ENCODE measurements at regions of chr2 and their contacts with region 1.

Region 1: DNA sequence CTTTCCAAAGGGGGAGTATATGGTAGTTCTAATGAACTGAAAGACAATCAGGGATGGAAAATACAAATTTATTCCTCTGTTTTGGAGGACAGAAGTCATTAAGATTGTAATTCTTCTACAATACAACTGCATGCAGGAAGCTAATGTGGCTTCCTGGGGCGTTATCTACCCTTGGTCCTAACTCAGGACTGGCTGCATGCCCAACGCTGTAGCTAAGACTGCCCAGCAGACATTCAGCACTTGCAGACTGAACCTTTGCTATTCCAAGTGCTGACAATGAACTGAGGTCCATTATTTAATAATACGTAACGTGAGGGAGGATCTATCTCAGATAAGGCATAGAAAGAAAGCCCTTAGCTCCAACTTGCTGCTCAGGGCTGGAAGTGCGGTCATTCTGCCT is 53.2 kb downstream of the ZAP70 start:
- DNase-seq: no peak
- H3K4me3 ChIP-seq: no peak overlapping the region
- H3K4me3 Mint-ChIP-seq: no peak overlapping the region
- H3K27ac ChIP-seq: no peak overlapping the region
- H3K27ac Mint-ChIP-seq: peak overlapping the region in 2 of 7 donors; percentile 0 to 8
- H3K4me1 ChIP-seq: peaks cover 8% of the 10 kb centered on the region
- H3K4me1 Mint-ChIP-seq: peaks cover 4 to 23% (median 12%) of the 10 kb centered on the region in 4 donors
- H3K27me3 ChIP-seq: no peaks in the 10 kb centered on the region
- H3K27me3 Mint-ChIP-seq: no peaks in the 10 kb centered on the region

Region 2: GRCh38 chr2:97710596-97711386 is 55.8 kb before region 1 on chr2:
- CTCF ChIA-PET with region 1: interaction called, 27 read pairs
- POLR2A ChIA-PET with region 1: interaction called, 3 read pairs
- intact Hi-C with region 1: loop called (anchors 2 kb)
- DNase-seq: peak in 1 of 5 donors; percentile 71
- H3K4me3 ChIP-seq: no peak overlapping the region
- H3K4me3 Mint-ChIP-seq: peak overlapping the region in 6 of 8 donors; percentile 3 to 97 (median 16)
- H3K27ac ChIP-seq: peak overlapping the region; percentile 31
- H3K27ac Mint-ChIP-seq: peak overlapping the region; percentile 69 to 95 (median 86)
- H3K4me1 ChIP-seq: peaks cover 57% of the 10 kb centered on the region
- H3K4me1 Mint-ChIP-seq: peaks cover 34 to 60% (median 45%) of the 10 kb centered on the region in 4 donors
- H3K27me3 ChIP-seq: no peaks in the 10 kb centered on the region
- H3K27me3 Mint-ChIP-seq: no peaks in the 10 kb centered on the region